ENCODE measurements at regions of chr19 and their contacts with region 1.

Region 1: DNA sequence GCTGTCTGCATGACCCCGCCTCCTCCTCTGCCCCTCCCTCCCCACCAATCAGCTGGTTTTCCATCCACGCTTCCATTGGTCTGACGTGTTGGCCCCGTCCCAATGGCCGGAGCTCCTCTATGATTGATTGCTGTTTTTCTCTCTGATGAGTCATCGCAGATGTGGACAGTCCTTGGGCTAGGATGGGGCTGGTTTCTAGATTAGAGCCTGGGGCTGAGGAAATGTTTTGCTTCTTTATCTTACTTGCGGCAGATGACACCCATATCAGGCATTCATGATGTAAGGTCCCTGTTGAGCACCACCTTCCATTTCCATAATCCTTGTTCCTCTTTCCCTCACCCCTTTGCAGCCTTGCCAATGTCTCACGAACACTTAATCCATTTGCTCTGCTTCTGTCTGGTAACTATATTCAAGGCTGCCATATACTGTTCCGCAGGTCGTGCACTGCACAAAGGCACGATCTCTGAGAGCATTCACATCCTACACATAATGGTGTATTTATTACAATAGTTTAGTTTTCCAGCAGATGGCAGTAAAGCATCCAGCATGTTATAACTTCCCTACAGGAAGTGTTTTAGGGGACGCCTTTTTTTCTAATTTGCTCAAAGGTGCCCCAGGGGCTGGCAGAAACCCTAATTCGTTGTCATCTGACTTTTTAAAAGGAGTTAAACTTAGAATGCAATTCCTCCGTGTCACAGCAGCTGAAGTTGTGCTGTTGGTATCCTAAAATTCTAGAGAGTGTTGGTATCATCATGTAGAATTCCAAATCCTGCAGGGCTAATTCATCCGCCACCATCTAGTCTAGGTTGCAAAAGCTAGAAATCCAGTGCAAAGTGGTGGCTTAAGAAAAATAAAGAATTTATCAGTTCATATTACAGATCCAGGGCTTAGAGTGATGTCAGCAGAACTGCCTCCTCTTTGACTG is 73.5 kb downstream of the MAP4K1 start:
- DNase-seq: peak; percentile 96 to 98
- ATAC-seq: peak; percentile 89 to 93
- H3K4me3 ChIP-seq: peak overlapping the region; percentile 37
- H3K27ac ChIP-seq: peak overlapping the region; percentile 59 to 69
- H3K4me1 ChIP-seq: peaks cover 14% of the 10 kb centered on the region
- CTCF ChIP-seq: peak; percentile 100
- EP300 ChIP-seq: no peak
- POLR2A ChIP-seq: no peak
- RAD21 ChIP-seq: peak; percentile 99

Region 2: GRCh38 chr19:38142176-38143035 is 401.9 kb before region 1 on chr19:
- CTCF ChIA-PET with region 1: no interaction called
- POLR2A ChIA-PET with region 1: no interaction called
- DNase-seq: peak; percentile 81 to 98
- ATAC-seq: peak; percentile 84 to 90
- H3K4me3 ChIP-seq: no peak overlapping the region
- H3K27ac ChIP-seq: no peak overlapping the region
- H3K4me1 ChIP-seq: no peaks in the 10 kb centered on the region
- CTCF ChIP-seq: peak; percentile 86
- EP300 ChIP-seq: no peak
- POLR2A ChIP-seq: no peak
- RAD21 ChIP-seq: peak; percentile 73 to 91

Region 3: DNA sequence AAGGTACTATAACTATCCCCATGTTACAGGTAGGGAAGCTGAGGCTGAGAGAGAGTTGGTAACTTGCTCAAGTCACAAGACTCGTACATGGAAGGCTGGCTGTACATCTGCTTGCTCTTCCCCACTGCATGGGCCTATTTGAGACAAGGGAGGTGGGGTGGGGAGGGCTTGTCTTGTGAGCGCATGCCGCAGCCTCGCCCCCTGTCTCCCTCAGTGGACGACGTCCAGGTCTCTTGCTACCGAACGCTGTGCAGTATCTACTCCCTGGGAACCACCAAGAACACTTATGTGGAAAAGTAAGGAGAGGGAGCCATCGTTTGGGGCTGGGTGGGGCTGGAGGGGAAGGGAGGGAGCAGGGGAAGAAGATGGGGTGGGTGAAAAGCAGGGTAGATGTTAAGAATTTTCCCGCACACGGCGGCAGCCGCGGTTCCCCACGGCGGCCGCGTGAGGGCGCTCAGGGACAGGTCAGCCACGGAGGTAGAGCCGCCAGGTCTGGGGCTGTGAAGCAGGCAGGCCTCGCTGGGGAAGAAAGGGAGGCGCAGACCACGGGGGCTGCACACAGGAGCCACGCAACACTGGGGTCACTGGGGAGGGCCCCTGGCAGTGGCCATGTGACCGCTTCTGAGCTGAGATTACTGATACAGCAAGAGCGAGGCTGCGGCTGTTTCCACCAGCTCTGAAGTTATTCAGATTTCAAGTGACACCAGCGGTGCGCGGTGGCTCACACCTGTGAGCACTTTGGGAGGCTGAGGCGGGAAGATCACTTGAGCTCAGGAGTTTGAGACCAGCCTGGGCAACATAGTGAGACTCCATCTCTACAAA is 29.3 kb before region 1 on chr19:
- CTCF ChIA-PET with region 1: interaction called, 38 read pairs
- POLR2A ChIA-PET with region 1: no interaction called
- DNase-seq: peak; percentile 83 to 98
- ATAC-seq: peak; percentile 78 to 94
- H3K4me3 ChIP-seq: no peak overlapping the region
- H3K27ac ChIP-seq: peak overlapping the region; percentile 15 to 54; a peak in 4 of 6 replicates
- H3K4me1 ChIP-seq: peaks cover 8% of the 10 kb centered on the region; the same call in 2 of the 3 replicates
- CTCF ChIP-seq: peak; percentile 99
- EP300 ChIP-seq: no peak
- POLR2A ChIP-seq: no peak
- RAD21 ChIP-seq: peak; percentile 98 to 99

Region 4: DNA sequence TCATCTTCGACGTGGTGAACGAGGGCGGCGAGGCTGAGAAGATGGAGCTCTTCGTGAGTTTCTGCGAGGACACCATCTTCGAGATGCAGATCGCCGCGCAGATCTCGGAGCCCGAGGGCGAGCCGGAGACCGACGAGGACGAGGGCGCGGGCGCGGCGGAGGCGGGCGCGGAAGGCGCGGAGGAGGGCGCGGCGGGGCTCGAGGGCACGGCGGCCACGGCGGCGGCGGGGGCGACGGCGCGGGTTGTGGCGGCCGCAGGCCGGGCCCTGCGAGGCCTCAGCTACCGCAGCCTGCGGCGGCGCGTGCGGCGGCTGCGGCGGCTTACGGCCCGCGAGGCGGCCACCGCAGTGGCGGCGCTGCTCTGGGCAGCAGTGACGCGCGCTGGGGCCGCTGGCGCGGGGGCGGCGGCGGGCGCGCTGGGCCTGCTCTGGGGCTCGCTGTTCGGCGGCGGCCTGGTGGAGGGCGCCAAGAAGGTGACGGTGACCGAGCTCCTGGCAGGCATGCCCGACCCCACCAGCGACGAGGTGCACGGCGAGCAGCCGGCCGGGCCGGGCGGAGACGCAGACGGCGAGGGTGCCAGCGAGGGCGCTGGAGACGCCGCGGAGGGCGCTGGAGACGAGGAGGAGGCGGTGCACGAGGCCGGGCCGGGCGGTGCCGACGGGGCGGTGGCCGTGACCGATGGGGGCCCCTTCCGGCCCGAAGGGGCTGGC is 20.8 kb after region 1 on chr19:
- CTCF ChIA-PET with region 1: interaction called, 31 read pairs
- POLR2A ChIA-PET with region 1: no interaction called
- DNase-seq: peak in 1 of 2 experiments; percentile 55
- ATAC-seq: peak; percentile 59 to 64
- H3K4me3 ChIP-seq: peak overlapping the region; percentile 39
- H3K27ac ChIP-seq: peak overlapping the region; percentile 64 to 86
- H3K4me1 ChIP-seq: 0 out of 3 replicates have a peak, but pooled peaks cover 3% of the 10 kb centered on the region
- CTCF ChIP-seq: peak; percentile 22; the same call in 2 of the 3 replicates
- EP300 ChIP-seq: no peak
- POLR2A ChIP-seq: peak; percentile 37; the same call in 1 of the 2 replicates
- RAD21 ChIP-seq: no peak

Region 5: DNA sequence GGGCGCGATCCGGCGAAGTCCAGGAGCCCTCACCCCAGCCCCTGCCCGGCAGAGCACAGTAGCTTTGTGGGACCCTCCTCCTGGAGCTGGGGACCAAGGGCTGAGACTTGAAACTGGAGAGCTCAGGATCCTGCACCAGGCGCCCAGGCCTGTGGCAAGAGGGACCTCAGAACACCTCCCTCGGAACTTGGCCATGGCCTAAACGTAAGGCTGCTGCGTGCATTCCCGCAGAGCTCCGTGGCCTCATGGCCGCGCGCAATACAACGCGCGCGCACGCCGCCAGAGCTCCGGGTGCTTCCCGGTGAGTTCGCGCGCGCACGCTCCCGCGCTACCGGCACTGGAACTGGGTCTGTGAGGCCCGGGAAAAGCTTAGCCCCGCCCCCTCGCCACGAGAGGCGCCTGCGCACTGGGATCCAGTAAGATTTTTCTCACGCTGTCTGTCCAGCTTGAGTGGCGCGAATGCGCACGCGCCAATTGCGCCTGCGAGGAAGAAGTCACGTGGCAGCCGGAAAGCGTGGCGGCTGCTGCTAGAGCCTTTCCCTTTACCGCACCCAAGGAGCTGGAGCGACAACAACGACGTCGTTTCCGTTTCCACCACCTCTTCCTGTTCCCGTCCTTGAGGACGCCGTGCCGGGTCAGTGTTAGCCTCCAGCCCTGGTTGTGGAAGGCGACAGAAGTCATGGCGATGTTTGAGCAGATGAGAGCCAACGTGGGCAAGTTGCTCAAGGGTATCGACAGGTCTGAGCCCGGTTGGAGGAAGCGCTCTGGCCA is 74.5 kb after region 1 on chr19 and contains the start of gene EIF3K:
- CTCF ChIA-PET with region 1: interaction called, 40 read pairs
- POLR2A ChIA-PET with region 1: interaction called, 11 read pairs
- DNase-seq: peak; percentile 100
- ATAC-seq: peak; percentile 87 to 93
- H3K4me3 ChIP-seq: peak within 1 kb of the TSS; percentile 86
- H3K27ac ChIP-seq: peak within 1 kb of the TSS; percentile 84 to 87
- H3K4me1 ChIP-seq: peaks cover 14% of the 10 kb centered on the region
- CTCF ChIP-seq: no peak
- EP300 ChIP-seq: no peak
- POLR2A ChIP-seq: peak; percentile 85
- RAD21 ChIP-seq: peak in 1 of 2 experiments; percentile 10; a peak in 1 of 5 replicates
- polyA plus RNA-seq, gene EIF3K: 419 and 491 TPM in 2 replicates

Region 6: DNA sequence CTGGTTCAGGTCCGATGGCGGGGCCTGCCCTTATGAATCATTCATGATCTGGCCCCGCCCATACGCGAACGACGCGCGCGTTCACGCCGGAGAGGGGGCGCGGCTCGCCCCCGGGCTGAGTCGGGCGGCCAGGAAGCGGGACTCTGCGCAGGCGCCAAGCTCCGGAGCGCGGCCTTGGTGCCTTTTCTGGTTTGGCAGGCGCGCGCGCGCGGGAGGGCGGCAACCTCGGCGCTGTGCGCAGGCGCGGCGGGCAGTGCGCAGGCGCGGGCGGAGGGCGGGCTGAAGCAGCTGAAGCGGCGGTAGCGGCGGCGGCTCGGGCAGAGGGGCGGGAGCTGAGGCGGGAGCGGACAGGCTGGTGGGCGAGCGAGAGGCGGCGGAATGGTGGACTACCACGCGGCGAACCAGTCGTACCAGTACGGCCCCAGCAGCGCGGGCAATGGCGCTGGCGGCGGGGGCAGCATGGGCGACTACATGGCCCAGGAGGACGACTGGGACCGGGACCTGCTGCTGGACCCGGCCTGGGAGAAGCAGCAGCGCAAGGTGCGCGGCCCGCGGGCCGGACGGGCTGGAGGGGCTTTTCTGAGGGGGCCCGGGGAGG is 103.2 kb after region 1 on chr19 and contains the start of gene ACTN4:
- CTCF ChIA-PET with region 1: interaction called, 15 read pairs
- POLR2A ChIA-PET with region 1: no interaction called
- DNase-seq: peak; percentile 99
- ATAC-seq: peak; percentile 65 to 68
- H3K4me3 ChIP-seq: peak within 1 kb of the TSS; percentile 85
- H3K27ac ChIP-seq: peak within 1 kb of the TSS; percentile 87 to 91
- H3K4me1 ChIP-seq: peaks cover 38% of the 10 kb centered on the region
- CTCF ChIP-seq: no peak
- EP300 ChIP-seq: no peak; a peak in 1 of 5 replicates
- POLR2A ChIP-seq: peak; percentile 100
- RAD21 ChIP-seq: peak in 1 of 2 experiments; percentile 50; a peak in 2 of 5 replicates
- polyA plus RNA-seq, gene ACTN4: 605 and 614 TPM in 2 replicates

Region 7: DNA sequence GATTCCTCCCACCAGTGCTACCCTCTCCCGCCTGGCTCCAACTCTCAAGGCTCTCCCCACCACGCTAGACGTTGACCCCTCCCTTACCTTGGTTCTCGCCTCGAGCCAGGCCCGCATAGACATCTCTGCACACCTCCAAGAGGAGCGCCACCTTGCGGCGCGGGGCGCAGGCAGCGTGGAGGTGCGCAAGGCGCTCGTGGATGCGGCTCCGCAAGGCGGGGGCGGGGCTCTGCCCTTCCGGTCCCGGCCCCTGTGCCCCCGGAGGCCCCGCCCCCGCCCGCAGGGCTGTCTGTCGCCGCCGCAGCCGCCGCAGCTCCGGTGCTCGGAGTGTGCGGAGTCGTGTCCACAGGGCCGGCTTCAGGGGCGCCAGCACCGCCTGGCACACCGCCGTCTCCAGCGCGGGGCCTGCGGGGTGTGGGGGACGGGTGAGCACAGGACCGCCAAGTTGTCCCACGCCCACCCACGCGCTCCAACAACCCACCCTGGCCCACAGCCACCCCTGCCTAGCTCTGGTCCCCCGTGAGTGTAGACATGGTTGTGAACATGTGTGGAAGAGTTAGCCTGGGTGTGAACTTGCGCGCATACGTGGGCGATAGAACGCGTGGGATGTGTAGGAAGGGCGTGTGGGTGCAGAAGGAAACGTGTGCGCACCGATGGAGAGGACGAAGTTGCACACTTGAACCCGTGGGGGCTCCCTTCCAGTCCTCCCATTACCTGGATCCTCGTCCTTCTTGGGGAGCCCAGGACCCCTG is 325.7 kb after region 1 on chr19:
- CTCF ChIA-PET with region 1: interaction called, 10 read pairs
- POLR2A ChIA-PET with region 1: no interaction called
- DNase-seq: peak; percentile 89 to 93
- ATAC-seq: peak; percentile 90 to 94
- H3K4me3 ChIP-seq: peak overlapping the region; percentile 31
- H3K27ac ChIP-seq: peak overlapping the region; percentile 56 to 80
- H3K4me1 ChIP-seq: peaks cover 18% of the 10 kb centered on the region
- CTCF ChIP-seq: peak; percentile 99
- EP300 ChIP-seq: no peak
- POLR2A ChIP-seq: no peak; the same call in 1 of the 2 replicates
- RAD21 ChIP-seq: peak; percentile 73 to 88

Measured in A549 (cell line).